PC-3 (cell line): ENCODE measurements at regions of chr14 and their contacts with region 1.

Region 1: GRCh38 chr14:43887523-43887922 is 619.6 kb downstream of the FSCB start:
- DNase-seq: no peak
- ATAC-seq: no peak
- H3K4me3 ChIP-seq: no peak overlapping the region
- H3K27ac ChIP-seq: no peak overlapping the region
- H3K4me1 ChIP-seq: no peaks in the 10 kb centered on the region
- H3K27me3 ChIP-seq: no peaks in the 10 kb centered on the region
- CTCF ChIP-seq: no peak

Region 2: GRCh38 chr14:43039881-43040280 is 847.6 kb before region 1 on chr14:
- CTCF ChIA-PET with region 1: no interaction called
- POLR2A ChIA-PET with region 1: interaction called, 14 read pairs
- intact Hi-C with region 1: no loop called
- DNase-seq: no peak
- ATAC-seq: no peak
- H3K4me3 ChIP-seq: no peak overlapping the region
- H3K27ac ChIP-seq: no peak overlapping the region
- H3K4me1 ChIP-seq: no peaks in the 10 kb centered on the region
- H3K27me3 ChIP-seq: no peaks in the 10 kb centered on the region
- CTCF ChIP-seq: no peak

Region 3: GRCh38 chr14:44009642-44010041 is 122.1 kb after region 1 on chr14:
- CTCF ChIA-PET with region 1: no interaction called
- POLR2A ChIA-PET with region 1: no interaction called
- intact Hi-C with region 1: no loop called
- DNase-seq: no peak
- ATAC-seq: peak; percentile 33; the same call in 1 of the 2 replicates
- H3K4me3 ChIP-seq: no peak overlapping the region
- H3K27ac ChIP-seq: no peak overlapping the region
- H3K4me1 ChIP-seq: no peaks in the 10 kb centered on the region
- H3K27me3 ChIP-seq: no peaks in the 10 kb centered on the region
- CTCF ChIP-seq: no peak

Region 4: DNA sequence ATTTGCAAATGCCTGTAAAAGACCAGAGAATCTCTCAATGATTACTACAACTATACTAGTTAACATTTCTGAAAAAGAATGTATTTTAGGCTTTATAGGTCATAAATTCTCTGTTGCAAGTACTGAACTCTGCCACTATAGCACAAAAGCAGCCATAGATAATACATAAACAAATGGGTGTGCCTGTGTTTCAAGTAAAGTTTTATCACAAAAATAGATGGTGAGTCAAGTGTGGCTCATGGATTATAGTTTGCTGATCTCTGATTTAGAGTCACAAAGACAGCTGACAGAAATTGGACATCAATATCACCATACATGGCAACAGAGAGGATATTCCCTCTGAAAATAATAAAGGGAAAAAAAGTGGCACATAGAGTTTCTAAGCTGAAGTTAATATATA is 551.4 kb after region 1 on chr14:
- CTCF ChIA-PET with region 1: no interaction called
- POLR2A ChIA-PET with region 1: no interaction called
- intact Hi-C with region 1: no loop called
- DNase-seq: peak; percentile 66
- ATAC-seq: peak; percentile 95
- H3K4me3 ChIP-seq: no peak overlapping the region
- H3K27ac ChIP-seq: 0 out of 2 replicates have a peak overlapping the region, but pooled peaks have one; percentile 38
- H3K4me1 ChIP-seq: peaks cover 8% of the 10 kb centered on the region
- H3K27me3 ChIP-seq: no peaks in the 10 kb centered on the region
- CTCF ChIP-seq: no peak